ENCODE measurements at regions of chr2 and their contacts with region 1.

Region 1: DNA sequence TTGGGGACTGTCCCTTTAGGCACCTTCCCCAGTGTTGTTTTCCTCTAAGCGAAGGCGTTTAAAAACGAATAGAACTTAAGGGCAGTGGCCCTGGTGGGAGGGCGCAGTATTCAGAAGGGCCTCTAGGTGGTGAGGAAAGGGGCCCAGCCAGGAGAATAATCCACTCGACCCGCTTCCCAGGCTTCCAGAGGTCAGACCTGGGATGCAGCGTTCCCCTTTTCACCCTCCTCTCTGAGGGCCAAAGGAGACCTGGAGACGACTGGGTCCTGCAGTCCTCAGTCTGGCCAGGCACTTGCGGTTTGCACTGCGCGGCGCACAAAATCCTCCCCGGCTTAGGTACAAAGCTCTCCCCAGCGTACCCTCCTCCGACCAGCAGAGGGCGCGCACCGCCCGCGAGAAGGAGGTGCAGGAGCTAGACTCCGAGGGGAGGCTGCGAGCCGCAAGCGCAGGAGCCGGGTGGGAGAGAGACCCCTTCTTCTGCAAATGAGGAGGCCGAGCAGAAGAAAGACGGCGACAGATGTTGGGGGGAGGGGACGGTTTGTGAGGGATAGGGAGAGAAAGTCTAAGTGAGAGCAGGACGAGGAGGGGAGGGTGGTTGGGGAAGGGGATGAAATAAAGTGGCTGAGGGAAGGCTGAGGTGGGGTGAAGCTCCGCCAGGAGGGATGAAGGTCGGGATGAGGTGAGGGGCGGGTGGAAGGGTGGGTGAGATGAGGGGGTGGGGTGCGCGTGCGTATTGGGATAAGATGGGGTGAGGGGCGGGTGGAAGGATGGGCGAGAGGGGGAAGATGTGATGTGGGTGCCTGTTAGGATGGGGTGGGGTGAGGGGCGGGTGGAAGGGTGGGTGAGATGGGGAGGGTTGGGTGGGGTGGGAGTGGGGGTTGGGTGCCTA is 4.9 kb downstream of the FEV start:
- H3K4me3 ChIP-seq: peak overlapping the region; percentile 42
- H3K27ac ChIP-seq: no peak overlapping the region; the same call in 1 of the 2 replicates
- H3K4me1 ChIP-seq: 0 out of 2 replicates have a peak, but pooled peaks cover 2% of the 10 kb centered on the region
- CTCF ChIP-seq: peak; percentile 99

Region 2: DNA sequence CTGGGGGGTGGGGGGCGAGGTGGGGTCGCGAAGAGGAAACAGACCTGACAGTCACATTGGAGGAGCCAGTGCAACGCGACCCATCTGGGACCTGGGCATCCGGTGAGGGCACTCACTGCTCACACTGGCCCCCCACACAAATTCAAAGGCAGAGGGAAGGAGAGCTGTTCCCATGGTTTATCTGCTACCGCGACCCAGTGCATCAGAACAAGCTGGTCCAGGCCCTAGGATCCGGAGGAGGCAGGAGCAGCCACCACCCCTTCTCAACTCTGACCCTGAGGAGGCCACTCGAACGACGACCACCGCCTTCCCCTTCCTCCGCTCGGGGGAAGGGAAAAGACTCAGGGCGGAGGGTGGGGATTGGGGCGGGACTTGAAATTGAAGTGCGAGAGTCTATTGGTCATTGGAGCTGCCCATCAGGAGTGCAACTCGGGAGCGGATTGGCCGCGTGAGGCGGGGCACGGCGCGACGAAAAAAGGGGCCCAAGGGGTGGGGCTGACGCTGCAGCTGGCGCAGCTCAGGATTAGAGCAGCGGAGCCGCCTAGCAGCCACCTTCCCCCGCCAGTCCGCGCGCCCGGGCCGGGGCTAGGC is 20.9 kb before region 1 on chr2 and contains the start of gene CDK5R2:
- CTCF ChIA-PET with region 1: interaction called, 65 read pairs
- POLR2A ChIA-PET with region 1: interaction called, 4 read pairs
- H3K4me3 ChIP-seq: peak within 1 kb of the TSS; percentile 51
- H3K27ac ChIP-seq: no peak within 1 kb of the TSS; the same call in 1 of the 2 replicates
- H3K4me1 ChIP-seq: peaks cover 9% of the 10 kb centered on the region
- CTCF ChIP-seq: no peak

Region 3: DNA sequence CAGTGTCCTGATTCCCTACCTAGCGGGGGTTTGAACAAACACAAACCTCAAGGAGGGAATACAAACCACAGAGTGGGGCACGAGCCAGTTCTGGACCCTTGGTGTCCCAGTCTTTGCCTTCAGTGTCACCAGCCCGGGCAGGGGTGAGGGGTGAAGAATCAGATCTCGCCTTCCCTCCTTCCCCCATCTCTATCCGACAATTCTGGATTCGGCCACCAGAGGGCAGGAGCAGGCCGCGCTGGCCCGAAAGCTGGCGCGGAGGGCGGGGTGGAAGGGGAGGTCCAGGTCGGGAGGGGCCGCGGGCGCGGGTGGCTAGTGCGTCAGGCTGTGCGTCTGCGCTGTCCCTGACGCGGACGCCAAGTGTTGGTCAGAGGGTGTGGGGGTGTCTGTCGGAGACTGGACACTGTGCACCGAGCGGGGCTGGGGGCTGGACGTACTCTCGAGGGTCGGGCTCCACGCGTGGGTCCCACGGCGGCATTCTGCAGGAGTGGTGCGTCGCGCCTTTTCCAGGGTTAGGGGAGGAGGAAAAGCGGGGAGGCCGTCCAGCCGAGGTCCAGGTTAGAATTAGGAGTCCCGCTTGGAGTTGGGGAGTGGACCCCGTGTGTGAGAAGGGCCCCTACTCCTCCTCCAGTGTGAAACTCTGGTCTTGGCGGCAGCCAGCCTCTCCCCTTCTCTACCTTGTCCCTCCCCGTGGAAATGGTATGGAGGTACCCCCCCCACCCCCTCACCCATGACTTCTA is 16.1 kb after region 1 on chr2:
- CTCF ChIA-PET with region 1: interaction called, 31 read pairs
- POLR2A ChIA-PET with region 1: no interaction called
- H3K4me3 ChIP-seq: peak overlapping the region; percentile 27
- H3K27ac ChIP-seq: no peak overlapping the region
- H3K4me1 ChIP-seq: no peaks in the 10 kb centered on the region
- CTCF ChIP-seq: peak; percentile 94

Region 4: GRCh38 chr2:219002395-219003266 is 22.5 kb after region 1 on chr2:
- CTCF ChIA-PET with region 1: interaction called, 31 read pairs
- POLR2A ChIA-PET with region 1: interaction called, 3 read pairs
- H3K4me3 ChIP-seq: peak overlapping the region; percentile 28
- H3K27ac ChIP-seq: no peak overlapping the region; the same call in 1 of the 2 replicates
- H3K4me1 ChIP-seq: no peaks in the 10 kb centered on the region
- CTCF ChIP-seq: peak; percentile 86

Region 5: DNA sequence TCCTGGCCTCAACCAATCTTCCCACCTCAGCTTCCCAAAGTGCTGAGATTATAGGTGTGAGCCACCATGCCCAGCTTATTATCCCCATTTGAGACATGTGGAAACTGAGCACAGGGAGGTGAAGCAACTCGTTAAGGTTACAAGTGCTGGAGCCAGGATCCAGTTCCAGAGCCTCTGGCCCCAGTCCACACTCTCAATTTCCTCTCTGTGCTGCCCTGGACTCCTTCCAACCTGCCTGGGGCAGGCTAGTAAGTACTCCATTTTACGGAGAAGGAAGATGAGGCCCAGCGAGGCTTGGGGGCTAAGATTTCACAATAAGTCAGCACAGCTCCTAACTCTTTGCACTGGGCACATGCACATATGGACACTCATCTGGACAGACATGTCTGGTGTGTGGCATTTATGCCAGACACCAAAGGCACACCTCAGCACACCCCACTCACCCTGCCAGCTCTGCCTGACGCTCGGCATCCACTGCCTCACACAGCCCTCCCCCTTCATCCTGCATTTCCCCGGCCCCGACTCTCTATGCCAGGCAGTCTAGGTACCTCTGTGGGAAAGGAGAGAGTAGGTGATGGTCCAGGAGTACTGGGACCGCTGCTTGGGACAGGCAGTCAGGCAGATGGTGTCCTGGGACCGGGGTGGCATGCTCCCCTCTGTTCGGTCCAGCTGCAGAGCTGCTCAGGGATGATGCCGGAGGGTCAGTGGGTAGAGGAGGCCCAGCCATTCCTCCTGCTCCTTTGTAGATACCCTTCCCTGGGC is 40.7 kb after region 1 on chr2:
- CTCF ChIA-PET with region 1: interaction called, 11 read pairs
- POLR2A ChIA-PET with region 1: no interaction called
- H3K4me3 ChIP-seq: no peak overlapping the region
- H3K27ac ChIP-seq: no peak overlapping the region
- H3K4me1 ChIP-seq: no peaks in the 10 kb centered on the region
- CTCF ChIP-seq: no peak

Region 6: GRCh38 chr2:219552382-219553167 is 572.5 kb after region 1 on chr2:
- CTCF ChIA-PET with region 1: no interaction called
- POLR2A ChIA-PET with region 1: no interaction called
- H3K4me3 ChIP-seq: peak overlapping the region; percentile 61
- H3K27ac ChIP-seq: no peak overlapping the region; the same call in 1 of the 2 replicates
- H3K4me1 ChIP-seq: peaks cover 3% of the 10 kb centered on the region; the same call in 1 of the 2 replicates
- CTCF ChIP-seq: no peak